ENCODE measurements at regions of chr1 and their contacts with region 1.

Region 1: GRCh38 chr1:160768295-160768657 is 27.7 kb upstream of the LY9 start:
- DNase-seq: peak; percentile 93
- H3K4me3 Mint-ChIP-seq: peak overlapping the region; percentile 67
- H3K27ac Mint-ChIP-seq: peak overlapping the region; percentile 96
- H3K4me1 Mint-ChIP-seq: peaks cover 31% of the 10 kb centered on the region
- H3K27me3 Mint-ChIP-seq: no peaks in the 10 kb centered on the region

Region 2: DNA sequence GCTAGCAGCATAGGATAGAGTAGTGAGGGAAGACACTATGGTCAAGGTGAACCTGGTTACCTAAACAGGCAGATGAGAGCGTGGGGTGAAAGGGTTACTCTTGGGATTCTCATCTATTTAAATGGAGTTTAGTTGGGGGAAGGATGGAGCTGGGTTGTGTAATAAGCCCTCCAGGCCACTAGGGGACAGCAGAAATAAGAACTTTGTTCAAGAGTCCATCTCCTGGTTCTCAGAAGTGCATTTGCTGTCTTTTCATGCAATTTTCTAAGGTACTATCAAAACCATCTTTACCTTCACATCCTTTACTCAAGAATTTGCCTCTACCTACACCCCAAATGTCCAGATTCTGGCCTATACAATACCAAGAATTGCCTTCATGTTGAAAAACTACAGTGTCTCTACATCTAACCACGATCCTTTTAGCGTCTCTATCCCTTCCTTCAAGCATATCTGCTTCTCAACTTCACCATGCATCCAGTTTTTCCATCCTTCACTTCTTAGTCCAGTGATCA is 149.5 kb before region 1 on chr1:
- CTCF ChIA-PET with region 1: interaction called, 11 read pairs
- DNase-seq: peak; percentile 52
- H3K4me3 Mint-ChIP-seq: no peak overlapping the region
- H3K27ac Mint-ChIP-seq: peak overlapping the region; percentile 44
- H3K4me1 Mint-ChIP-seq: peaks cover 72% of the 10 kb centered on the region
- H3K27me3 Mint-ChIP-seq: no peaks in the 10 kb centered on the region

Region 3: GRCh38 chr1:160726498-160727315 is 41.6 kb before region 1 on chr1:
- CTCF ChIA-PET with region 1: interaction called, 240 read pairs
- DNase-seq: peak; percentile 75
- H3K4me3 Mint-ChIP-seq: no peak overlapping the region
- H3K27ac Mint-ChIP-seq: no peak overlapping the region
- H3K4me1 Mint-ChIP-seq: peaks cover 22% of the 10 kb centered on the region
- H3K27me3 Mint-ChIP-seq: no peaks in the 10 kb centered on the region

Region 4: GRCh38 chr1:160748181-160748877 is 19.9 kb before region 1 on chr1:
- CTCF ChIA-PET with region 1: interaction called, 43 read pairs
- DNase-seq: no peak
- H3K4me3 Mint-ChIP-seq: no peak overlapping the region
- H3K27ac Mint-ChIP-seq: no peak overlapping the region
- H3K4me1 Mint-ChIP-seq: peaks cover 79% of the 10 kb centered on the region
- H3K27me3 Mint-ChIP-seq: no peaks in the 10 kb centered on the region

Region 5: DNA sequence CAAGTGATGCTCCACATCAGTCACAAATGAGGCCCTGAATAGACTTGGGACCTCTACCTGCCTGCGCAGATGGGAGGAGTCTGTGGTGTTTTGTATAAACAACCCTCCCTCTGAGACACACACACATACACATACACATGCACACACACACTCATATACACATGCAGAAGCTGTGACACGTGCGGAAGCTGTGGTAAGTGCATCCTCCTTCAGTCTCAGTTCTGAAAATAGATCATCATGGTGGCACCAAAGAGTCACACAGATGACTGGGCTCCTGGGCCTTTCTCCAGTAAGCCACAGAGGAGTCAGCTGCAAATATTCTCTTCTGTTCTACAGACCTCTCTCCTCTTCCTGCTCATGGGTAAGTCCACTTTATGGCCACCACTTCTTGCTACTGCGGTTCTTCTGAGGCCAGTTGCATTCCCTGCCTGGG is 27.7 kb after region 1 on chr1 and contains the start of gene LY9:
- CTCF ChIA-PET with region 1: interaction called, 50 read pairs
- DNase-seq: peak; percentile 89
- H3K4me3 Mint-ChIP-seq: peak within 1 kb of the TSS; percentile 96
- H3K27ac Mint-ChIP-seq: peak within 1 kb of the TSS; percentile 99
- H3K4me1 Mint-ChIP-seq: peaks cover 63% of the 10 kb centered on the region
- H3K27me3 Mint-ChIP-seq: no peaks in the 10 kb centered on the region

Measured in activated naive CD4-positive, alpha-beta T cell treated with anti-CD3 and anti-CD28 coated beads, Interleukin-2, amount 10 ng/mL, durations not matched to agents 7 days and 5 days (primary cell).